Vagina (tissue), 2 donors: ENCODE measurements at regions of chr14 and their contacts with region 1.

Region 1: DNA sequence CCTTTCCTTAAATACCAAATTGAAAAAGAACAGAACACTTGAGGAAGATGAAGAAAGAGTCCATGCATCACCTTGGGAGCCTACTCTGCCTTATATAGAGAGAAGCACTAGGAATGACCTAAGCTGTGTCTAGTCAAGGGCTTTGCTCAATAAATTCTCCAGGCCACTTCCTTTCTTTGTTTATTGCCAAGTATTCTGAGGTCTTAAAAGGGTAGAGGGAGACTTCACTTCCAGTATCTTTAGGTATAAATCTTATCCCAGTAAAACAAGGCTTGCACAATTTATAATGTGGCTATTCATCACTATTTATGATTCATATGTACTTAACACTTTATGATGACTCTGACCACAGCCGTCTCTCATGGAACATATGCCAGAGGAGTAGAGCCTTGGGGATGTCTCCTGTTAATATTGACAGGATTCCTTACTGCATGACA is 85.1 kb upstream of the ARHGAP5 start:
- DNase-seq: no peak
- H3K4me3 ChIP-seq: no peak overlapping the region
- H3K27ac ChIP-seq: no peak overlapping the region
- H3K4me1 ChIP-seq: peaks cover 20% of the 10 kb centered on the region
- H3K27me3 ChIP-seq: no peaks in the 10 kb centered on the region
- CTCF ChIP-seq: no peak
- POLR2A ChIP-seq: no peak

Region 2: DNA sequence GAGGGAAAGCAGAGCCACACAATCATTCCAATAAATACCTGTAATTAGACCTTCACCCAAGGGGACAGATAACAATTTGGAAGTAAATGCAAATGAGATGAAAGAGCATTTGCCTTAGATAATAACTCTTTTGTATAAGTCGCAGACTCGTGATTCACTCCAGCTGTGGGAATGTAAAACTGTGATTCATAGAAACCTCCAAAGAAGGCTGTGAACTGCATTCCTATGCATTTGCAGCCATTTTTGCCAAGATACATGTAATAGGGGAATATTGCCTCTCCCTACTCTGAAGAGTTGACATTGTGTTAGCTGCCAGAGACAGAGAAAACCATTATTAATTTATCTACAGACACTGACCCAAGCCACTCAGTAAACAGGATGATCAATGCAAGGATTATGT is 96.8 kb before region 1 on chr14:
- intact Hi-C with region 1: no loop called
- DNase-seq: no peak
- H3K4me3 ChIP-seq: no peak overlapping the region
- H3K27ac ChIP-seq: no peak overlapping the region
- H3K4me1 ChIP-seq: no peaks in the 10 kb centered on the region
- H3K27me3 ChIP-seq: no peaks in the 10 kb centered on the region
- CTCF ChIP-seq: no peak
- POLR2A ChIP-seq: no peak

Region 3: GRCh38 chr14:31937721-31938346 is 54.2 kb before region 1 on chr14:
- intact Hi-C with region 1: loop called (anchors 10 kb)
- DNase-seq: no peak
- H3K4me3 ChIP-seq: no peak overlapping the region
- H3K27ac ChIP-seq: no peak overlapping the region
- H3K4me1 ChIP-seq: no peaks in the 10 kb centered on the region
- H3K27me3 ChIP-seq: no peaks in the 10 kb centered on the region
- CTCF ChIP-seq: no peak
- POLR2A ChIP-seq: no peak

Region 4: DNA sequence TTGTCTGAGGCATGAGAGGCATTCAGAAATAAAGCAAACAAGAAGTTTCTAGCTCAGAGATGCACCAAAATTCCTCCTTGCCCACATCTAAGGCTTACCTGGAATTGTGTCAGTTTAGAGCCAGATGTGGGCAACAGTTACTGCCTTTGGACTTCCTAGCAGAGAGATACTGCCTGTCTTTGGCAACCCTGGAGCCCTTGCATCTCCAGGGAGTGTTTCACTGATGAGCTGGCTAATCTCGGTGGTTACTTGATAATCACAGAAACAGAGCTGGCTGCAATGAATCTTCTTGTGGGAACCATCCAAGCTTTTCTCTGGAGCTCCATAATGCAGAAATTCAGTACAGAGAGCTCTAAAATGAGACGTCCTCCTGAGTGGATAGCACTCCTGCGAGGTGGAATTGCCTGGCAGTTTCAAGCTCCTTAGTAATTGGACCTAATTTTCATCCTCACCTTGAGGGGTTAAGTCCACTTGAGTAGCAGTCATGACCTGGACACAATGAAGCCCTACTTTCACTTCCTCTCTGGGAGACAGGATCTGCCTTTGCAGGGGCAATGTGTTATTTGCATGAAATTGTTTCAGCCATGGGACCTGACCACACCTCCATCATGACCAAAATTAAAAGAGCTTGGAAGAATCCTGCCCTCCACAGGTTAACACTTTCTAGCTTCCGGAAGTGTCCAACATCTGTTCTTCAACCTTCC is 23.8 kb before region 1 on chr14:
- intact Hi-C with region 1: loop called (anchors 2 kb)
- DNase-seq: no peak
- H3K4me3 ChIP-seq: no peak overlapping the region
- H3K27ac ChIP-seq: no peak overlapping the region
- H3K4me1 ChIP-seq: peaks cover 50% of the 10 kb centered on the region
- H3K27me3 ChIP-seq: no peaks in the 10 kb centered on the region
- CTCF ChIP-seq: no peak
- POLR2A ChIP-seq: no peak

Region 5: DNA sequence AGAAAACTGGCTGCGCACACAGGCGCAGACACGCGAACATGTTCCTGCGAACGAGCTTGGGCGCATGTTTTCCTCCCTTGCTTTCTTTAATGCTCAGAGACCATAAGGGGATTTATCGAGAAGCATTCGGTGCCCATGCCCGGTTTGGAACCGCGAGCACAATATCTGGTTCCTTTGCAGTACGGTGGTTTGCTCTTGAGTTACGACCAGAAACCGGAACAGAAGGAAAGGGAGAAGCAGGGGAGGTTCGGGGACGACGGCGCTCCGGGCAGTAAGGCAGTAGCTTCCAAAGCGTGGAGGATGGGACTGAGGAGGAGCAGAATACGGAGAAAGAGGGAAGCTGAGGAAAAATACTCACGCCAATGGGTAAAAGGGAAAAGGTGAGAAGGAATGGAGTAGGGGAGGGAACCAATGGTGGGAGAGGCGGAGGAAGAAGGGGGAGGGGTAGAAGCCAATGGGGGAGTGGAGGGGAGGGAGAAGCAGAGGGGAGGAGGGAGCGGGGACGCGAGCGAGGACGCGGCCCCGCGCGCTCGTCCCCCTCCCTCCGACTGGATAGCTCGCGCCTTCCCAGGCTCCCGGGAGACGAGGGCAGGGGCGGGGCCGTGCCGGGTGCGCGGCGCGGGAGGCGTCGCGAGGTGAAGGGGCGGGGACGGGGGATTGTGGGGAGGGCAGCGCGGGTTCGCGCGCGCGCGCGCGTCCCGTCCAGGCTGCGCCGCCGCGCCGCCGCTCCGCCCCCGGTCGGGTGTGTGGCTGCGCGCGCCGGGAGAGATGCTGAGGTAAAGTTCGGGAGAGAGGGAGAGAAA is 84.5 kb after region 1 on chr14:
- intact Hi-C with region 1: loop called (anchors 2 kb)
- DNase-seq: peak in 1 of 2 donors; percentile 95
- H3K4me3 ChIP-seq: peak overlapping the region; percentile 94 to 95
- H3K27ac ChIP-seq: peak overlapping the region; percentile 100
- H3K4me1 ChIP-seq: peaks cover 51% of the 10 kb centered on the region
- H3K27me3 ChIP-seq: no peaks in the 10 kb centered on the region
- CTCF ChIP-seq: no peak
- POLR2A ChIP-seq: peak in 1 of 2 donors; percentile 74

Region 6: DNA sequence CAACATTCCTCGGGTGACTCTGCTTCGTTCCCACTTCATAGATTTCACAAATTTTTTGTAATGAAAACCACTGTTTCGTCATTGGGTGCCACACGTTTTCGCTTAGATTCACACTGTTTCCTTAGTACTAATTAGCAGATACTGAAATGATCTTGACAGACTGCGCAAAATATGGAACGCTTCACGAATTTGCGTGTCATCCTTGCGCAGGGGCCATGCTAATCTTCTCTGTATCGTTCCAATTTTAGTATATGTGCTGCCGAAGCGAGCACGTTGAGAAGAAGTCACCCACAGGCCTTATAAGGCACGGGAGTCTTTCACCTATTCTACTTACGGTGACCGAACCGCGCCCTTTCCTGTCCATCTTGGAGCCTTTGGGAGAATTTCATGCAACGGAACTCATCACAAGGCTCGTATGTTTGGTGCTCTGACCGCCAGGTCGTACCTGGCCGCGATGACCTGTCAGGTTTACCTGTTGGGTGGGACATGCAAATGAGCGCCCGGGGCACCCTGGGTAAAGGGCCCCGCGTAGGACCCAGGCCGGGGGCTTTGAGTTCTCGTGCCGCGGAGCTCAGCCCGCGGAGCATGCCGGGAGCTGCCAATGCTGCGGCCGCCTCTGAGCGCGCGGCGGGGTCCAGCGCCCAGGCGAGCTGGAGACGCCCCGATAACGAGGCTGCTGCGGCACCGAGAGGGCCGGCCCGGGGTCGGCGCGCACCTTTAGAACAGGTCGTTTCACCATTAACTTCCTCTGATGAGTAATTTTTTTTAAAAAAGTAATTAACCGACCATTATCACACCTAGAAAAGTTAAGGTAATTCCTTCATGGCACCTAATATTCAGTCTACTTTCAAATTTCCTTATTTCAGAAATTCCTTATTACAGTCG is 211.2 kb after region 1 on chr14 and contains the start of gene RNU6-8:
- intact Hi-C with region 1: loop called (anchors 10 kb)
- DNase-seq: peak in 1 of 2 donors; percentile 94
- H3K4me3 ChIP-seq: peak within 1 kb of the TSS; percentile 63 to 69
- H3K27ac ChIP-seq: peak within 1 kb of the TSS; percentile 80
- H3K4me1 ChIP-seq: peaks cover 15% of the 10 kb centered on the region
- H3K27me3 ChIP-seq: no peaks in the 10 kb centered on the region
- CTCF ChIP-seq: no peak
- POLR2A ChIP-seq: peak in 1 of 2 donors; percentile 32
- total RNA-seq, gene RNU6-8: not detected

Region 7: DNA sequence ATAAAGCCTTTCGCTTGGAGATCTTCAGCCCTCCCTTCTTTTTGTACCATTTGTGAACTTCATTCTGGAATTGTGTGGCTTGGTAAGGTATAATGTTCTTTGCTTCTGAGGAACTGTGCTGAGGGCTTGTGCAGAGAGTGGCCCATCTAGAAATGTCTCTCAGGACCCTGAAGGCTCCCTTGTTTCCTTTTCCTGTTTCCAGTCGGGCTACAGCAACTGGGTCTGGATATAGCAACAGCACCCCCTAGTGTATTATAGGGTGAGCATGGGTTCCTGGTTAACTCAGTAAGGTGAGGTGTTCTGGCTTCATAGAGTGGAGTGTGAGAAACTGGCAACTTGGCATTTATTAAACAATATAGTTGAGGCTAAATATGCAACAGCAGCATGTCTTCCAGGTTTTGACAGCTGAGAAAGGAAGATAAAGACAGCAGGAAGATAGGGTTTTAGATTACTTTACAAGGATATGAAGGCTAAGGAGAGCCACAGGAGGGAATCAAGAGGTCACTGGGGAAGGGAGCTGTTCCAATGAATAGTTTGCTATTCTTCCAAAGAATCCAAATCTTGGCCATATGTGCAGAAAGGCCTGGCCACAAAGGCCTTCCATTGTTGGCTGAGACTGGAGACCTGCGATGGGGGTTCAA is 260.1 kb after region 1 on chr14:
- intact Hi-C with region 1: loop called (anchors 10 kb)
- DNase-seq: no peak
- H3K4me3 ChIP-seq: no peak overlapping the region
- H3K27ac ChIP-seq: no peak overlapping the region
- H3K4me1 ChIP-seq: peaks cover 6% of the 10 kb centered on the region
- H3K27me3 ChIP-seq: no peaks in the 10 kb centered on the region
- CTCF ChIP-seq: peak; percentile 49 to 77 (median 62)
- POLR2A ChIP-seq: no peak